ENCODE measurements at regions of chr1 and their contacts with region 1.

Region 1: GRCh38 chr1:36342481-36343478 is 19.3 kb upstream of the EVA1B start:
- DNase-seq: no peak
- H3K4me3 ChIP-seq: no peak overlapping the region
- H3K27me3 ChIP-seq: no peaks in the 10 kb centered on the region
- CTCF ChIP-seq: peak; percentile 81

Region 2: DNA sequence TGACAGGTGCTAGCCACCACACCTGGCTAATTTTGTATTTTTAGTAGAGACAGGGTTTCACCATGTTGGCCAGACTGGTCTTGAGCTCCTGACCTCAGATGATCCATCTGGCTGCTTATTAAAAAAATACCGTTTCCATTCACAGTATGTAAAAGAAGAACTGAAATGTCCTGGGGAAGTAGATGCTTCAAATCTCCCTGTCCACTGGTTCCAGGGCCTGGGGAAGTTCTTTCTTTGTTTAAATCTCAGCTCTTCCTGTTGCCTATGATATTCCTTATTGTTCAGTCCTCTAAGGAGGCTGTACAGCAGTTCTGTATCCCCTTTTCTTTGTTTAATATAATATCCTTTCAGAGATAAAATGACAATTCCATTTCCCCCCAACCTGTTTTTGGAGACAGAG is 1216.2 kb before region 1 on chr1:
- CTCF ChIA-PET with region 1: no interaction called
- POLR2A ChIA-PET with region 1: no interaction called
- DNase-seq: no peak
- H3K4me3 ChIP-seq: no peak overlapping the region
- H3K27me3 ChIP-seq: no peaks in the 10 kb centered on the region
- CTCF ChIP-seq: no peak

Region 3: GRCh38 chr1:36269408-36269838 is 73.4 kb before region 1 on chr1:
- CTCF ChIA-PET with region 1: no interaction called
- POLR2A ChIA-PET with region 1: no interaction called
- DNase-seq: no peak
- H3K4me3 ChIP-seq: no peak overlapping the region
- H3K27me3 ChIP-seq: no peaks in the 10 kb centered on the region
- CTCF ChIP-seq: no peak

Region 4: GRCh38 chr1:36279789-36280296 is 62.9 kb before region 1 on chr1:
- CTCF ChIA-PET with region 1: no interaction called
- POLR2A ChIA-PET with region 1: no interaction called
- DNase-seq: no peak
- H3K4me3 ChIP-seq: no peak overlapping the region
- H3K27me3 ChIP-seq: no peaks in the 10 kb centered on the region
- CTCF ChIP-seq: no peak

Region 5: GRCh38 chr1:36323597-36324352 is 19.0 kb before region 1 on chr1 and contains the start of gene EVA1B:
- CTCF ChIA-PET with region 1: interaction called, 25 read pairs
- POLR2A ChIA-PET with region 1: no interaction called
- DNase-seq: peak; percentile 52
- H3K4me3 ChIP-seq: peak within 1 kb of the TSS; percentile 81
- H3K27me3 ChIP-seq: no peaks in the 10 kb centered on the region
- CTCF ChIP-seq: no peak
- polyA plus RNA-seq, gene EVA1B: 101 and 133 TPM in 2 replicates

Region 6: DNA sequence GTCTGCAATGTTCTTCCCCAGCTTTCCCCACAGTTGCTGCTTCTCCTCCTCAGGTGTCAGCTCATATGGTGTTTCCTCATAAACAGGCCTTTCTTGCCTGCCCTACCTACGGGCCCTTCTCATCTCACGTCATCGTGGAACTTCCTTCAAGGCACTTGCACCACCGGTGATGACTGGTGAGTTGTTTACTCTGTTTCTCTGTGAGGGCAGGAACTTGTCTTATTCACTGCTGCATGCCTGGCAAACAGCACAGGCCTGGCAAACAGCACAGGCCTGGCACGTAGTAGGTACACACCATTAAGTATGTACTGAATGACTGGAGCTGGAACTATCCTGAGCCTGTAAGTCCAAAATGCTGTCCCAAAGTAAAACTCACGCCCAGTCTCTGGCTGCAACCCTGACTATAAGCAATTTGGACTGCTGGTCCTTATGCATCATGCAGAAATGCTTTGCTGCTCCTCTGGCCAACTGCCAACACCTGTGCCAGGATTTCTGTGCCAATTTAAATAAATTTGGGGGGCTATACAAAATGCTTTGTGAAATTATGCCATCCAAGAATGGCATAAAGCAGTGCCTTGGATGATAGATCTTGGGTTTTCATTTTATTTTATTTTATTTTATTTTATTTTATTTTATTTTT is 17.3 kb after region 1 on chr1:
- CTCF ChIA-PET with region 1: interaction called, 42 read pairs
- POLR2A ChIA-PET with region 1: no interaction called
- DNase-seq: no peak
- H3K4me3 ChIP-seq: no peak overlapping the region
- H3K27me3 ChIP-seq: no peaks in the 10 kb centered on the region
- CTCF ChIP-seq: no peak

Region 7: GRCh38 chr1:36385410-36386257 is 42.9 kb after region 1 on chr1 and contains the start of gene STK40:
- CTCF ChIA-PET with region 1: interaction called, 13 read pairs
- POLR2A ChIA-PET with region 1: interaction called, 5 read pairs
- DNase-seq: peak; percentile 93
- H3K4me3 ChIP-seq: peak within 1 kb of the TSS; percentile 85
- H3K27me3 ChIP-seq: no peaks in the 10 kb centered on the region
- CTCF ChIP-seq: no peak
- polyA plus RNA-seq, gene STK40: 19.5 and 29.5 TPM in 2 replicates

Region 8: GRCh38 chr1:36420836-36421664 is 78.3 kb after region 1 on chr1:
- CTCF ChIA-PET with region 1: interaction called, 46 read pairs
- POLR2A ChIA-PET with region 1: interaction called, 4 read pairs
- DNase-seq: no peak
- H3K4me3 ChIP-seq: no peak overlapping the region
- H3K27me3 ChIP-seq: no peaks in the 10 kb centered on the region
- CTCF ChIP-seq: peak; percentile 94